ENCODE measurements at regions of chr13 and their contacts with region 1.

Region 1: DNA sequence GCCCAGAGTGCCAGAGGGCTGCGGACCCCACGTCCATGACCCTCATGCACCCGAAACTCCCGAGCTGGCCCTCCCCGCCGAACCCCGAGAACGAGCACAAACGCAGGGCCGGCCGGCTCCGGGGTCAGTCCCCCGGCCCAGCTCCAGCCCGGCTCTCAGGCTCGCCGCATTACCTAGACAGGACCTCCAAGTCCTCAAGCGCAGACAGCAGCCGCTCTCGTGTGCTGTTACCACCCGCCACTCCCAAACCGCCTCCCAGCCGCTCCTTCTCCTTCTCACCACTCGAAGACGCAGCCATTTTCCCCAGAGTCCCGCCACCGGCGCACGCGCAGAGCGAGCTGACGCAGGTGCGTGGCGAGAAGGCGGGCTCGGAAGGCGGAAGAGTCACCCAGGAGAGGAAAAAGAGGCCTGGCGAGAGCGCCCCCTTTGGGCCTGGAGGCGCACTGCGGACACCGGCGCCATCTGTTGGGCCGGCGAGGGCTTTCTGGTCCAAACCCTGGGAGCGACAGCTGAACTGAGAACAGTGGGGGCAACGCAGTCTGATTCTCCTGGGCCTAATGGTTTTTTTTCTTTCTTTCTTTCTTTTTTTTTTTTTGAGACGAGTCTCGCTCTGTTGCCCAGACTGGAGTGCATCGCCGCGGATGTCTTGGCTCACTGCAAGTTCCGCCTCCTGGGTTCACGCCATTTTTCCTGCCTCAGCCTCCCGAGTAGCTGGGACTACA is at the start of gene MED4:
- DNase-seq: peak; percentile 57
- H3K4me3 ChIP-seq: peak within 1 kb of the TSS; percentile 87
- CTCF ChIP-seq: peak; percentile 100

Region 2: DNA sequence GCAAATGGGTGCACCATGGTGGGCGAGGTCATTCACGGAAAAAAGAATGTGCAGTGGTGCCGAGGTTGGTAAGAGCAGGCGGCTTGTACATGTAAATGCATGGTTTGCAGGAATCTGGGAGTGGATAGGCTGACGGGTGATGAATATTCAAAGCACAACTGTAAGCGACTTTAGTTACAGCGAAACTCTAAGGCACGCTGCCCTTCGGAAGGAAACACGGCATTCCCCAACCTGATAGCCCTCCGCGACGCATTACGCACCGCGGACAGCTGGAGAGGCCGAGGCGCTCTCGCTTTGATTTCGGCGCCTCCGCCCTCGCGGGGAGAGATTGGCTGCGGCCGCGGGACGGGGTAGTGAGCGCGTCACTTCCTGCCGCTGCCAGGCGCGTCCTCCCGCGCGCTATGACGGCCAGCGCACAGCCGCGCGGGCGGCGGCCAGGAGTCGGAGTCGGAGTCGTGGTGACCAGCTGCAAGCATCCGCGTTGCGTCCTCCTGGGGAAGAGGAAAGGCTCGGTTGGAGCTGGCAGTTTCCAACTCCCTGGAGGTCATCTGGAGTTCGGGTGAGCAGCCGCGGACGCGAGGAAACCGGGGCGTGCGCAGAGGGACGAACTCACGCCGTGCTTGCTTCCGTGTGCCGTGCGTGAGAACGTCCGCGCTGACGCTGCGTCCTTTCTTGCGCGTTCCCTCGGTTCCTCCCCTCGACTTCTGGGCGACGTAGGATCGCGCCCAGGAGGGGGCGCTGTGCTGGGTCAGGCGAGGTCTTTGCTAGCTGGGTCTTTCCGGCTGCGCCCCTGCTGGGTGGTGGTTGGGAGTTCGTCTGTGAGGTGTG is 57.4 kb before region 1 on chr13 and contains the start of gene NUDT15:
- CTCF ChIA-PET with region 1: interaction called, 25 read pairs
- POLR2A ChIA-PET with region 1: interaction called, 4 read pairs
- DNase-seq: peak; percentile 69
- H3K4me3 ChIP-seq: peak within 1 kb of the TSS; percentile 99
- CTCF ChIP-seq: peak; percentile 99

Region 3: DNA sequence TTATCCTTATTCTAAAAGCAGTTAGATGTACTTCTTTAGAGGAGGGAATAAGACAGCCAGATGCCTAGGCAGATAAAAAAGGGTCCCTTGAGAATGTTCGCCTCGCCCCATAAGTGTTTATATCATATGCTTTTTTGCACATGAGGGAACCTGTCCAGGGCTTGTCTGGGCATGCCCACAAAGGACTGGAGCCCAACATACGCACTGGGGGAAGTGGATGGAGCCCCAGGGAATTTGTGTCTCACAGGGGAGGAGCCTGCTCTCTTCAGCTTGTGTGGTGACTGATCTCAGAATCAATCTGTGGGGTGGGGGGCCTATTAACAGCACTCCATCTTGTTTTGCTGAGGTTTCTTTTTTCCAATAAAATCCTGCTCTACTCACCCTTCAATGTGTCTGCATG is 22.6 kb before region 1 on chr13:
- CTCF ChIA-PET with region 1: interaction called, 10 read pairs
- POLR2A ChIA-PET with region 1: no interaction called
- DNase-seq: no peak
- H3K4me3 ChIP-seq: no peak overlapping the region
- CTCF ChIP-seq: no peak

Region 4: DNA sequence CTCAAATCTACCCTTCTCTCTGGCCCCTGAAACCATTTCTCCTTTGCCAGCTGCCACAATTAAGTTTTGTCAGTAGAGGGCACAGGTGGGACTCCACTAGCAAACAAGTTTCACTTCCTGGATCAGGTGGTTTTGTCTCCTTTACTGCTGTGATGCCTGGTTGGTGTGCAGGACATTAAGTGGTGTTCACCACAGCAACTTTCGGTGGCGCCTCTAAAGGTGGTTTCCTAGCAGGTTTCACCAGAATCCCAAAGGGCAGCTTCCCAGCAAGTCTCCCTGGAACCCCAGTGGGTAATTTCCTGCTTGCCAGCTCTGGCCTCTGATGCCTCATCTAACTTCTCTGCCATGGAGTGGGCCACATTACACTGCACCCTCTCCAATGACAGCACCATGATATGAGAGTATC is 16.7 kb before region 1 on chr13:
- CTCF ChIA-PET with region 1: interaction called, 10 read pairs
- POLR2A ChIA-PET with region 1: no interaction called
- DNase-seq: no peak
- H3K4me3 ChIP-seq: no peak overlapping the region
- CTCF ChIP-seq: no peak

Region 5: GRCh38 chr13:48110931-48111721 is 16.2 kb after region 1 on chr13:
- CTCF ChIA-PET with region 1: interaction called, 10 read pairs
- POLR2A ChIA-PET with region 1: no interaction called
- DNase-seq: no peak
- H3K4me3 ChIP-seq: no peak overlapping the region
- CTCF ChIP-seq: no peak